Activated CD4-positive, alpha-beta memory T cell treated with anti-CD3 and anti-CD28 coated beads for 36 hours (primary cell): ENCODE measurements at regions of chr13 and their contacts with region 1.

Region 1: DNA sequence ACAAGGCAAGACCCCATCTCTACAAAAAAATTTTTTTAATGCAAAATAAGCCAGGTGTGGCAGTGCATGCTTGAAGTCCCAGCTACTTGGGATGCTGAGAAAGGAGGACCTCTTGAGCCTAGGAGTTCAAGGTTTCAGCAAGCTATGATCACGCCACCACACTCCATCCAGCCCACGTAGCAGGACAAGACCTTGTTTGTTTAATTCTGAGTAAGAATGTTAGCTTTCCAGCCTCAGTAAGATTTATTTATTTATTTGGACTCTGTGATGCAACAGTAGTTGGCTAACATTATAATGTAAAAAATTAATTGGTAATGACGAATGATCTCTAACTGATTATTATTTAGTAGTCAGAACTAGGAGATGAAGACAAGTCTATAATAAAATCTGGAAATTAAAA is 23.3 kb downstream of the N4BP2L2 start:
- DNase-seq: no peak
- H3K4me3 Mint-ChIP-seq: no peak overlapping the region
- H3K27ac Mint-ChIP-seq: no peak overlapping the region
- H3K4me1 Mint-ChIP-seq: peaks cover 13% of the 10 kb centered on the region
- H3K27me3 Mint-ChIP-seq: no peaks in the 10 kb centered on the region

Region 2: GRCh38 chr13:32472194-32472621 is 43.0 kb before region 1 on chr13:
- CTCF ChIA-PET with region 1: interaction called, 3 read pairs
- POLR2A ChIA-PET with region 1: interaction called, 4 read pairs
- intact Hi-C with region 1: loop called (anchors 1 kb)
- DNase-seq: no peak
- H3K4me3 Mint-ChIP-seq: no peak overlapping the region
- H3K27ac Mint-ChIP-seq: peak overlapping the region; percentile 84
- H3K4me1 Mint-ChIP-seq: peaks cover 18% of the 10 kb centered on the region
- H3K27me3 Mint-ChIP-seq: no peaks in the 10 kb centered on the region

Region 3: DNA sequence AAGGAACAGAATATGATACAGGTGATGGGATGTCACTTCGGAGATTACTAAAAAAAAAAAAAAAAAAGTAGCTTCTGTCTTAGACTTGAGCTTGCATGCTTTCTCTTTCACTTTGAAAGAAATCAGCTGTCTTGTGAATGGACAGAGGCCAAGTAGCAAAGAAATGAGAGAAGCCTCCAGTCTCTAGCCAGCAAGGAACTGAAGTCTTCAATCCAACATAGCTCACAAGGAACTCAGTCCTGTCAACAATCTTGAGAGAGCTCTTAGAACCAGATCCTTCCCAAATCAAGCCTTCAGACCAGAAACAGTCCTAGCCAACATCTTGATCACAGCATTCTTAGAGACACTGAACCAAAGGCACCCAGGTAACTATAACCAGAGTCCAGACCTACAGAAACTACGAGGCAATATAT is 15.6 kb after region 1 on chr13:
- CTCF ChIA-PET with region 1: no interaction called
- POLR2A ChIA-PET with region 1: no interaction called
- intact Hi-C with region 1: loop called (anchors 1 kb)
- DNase-seq: no peak
- H3K4me3 Mint-ChIP-seq: peak overlapping the region; percentile 71
- H3K27ac Mint-ChIP-seq: peak overlapping the region; percentile 87
- H3K4me1 Mint-ChIP-seq: peaks cover 81% of the 10 kb centered on the region
- H3K27me3 Mint-ChIP-seq: no peaks in the 10 kb centered on the region